Heart right ventricle (tissue), 16 donors: ENCODE measurements at regions of chr21 and their contacts with region 1.

Region 1: GRCh38 chr21:36113647-36114428 is 21.0 kb upstream of the CBR3 start:
- DNase-seq: no peak
- ATAC-seq: no peak
- H3K4me3 ChIP-seq: peak overlapping the region in 1 of 10 donors; percentile 59
- H3K27ac ChIP-seq: peak overlapping the region in 1 of 10 donors; percentile 75
- H3K4me1 ChIP-seq: peaks cover 0 to 19% (median 4%) of the 10 kb centered on the region in 9 donors
- H3K27me3 ChIP-seq: no peaks in the 10 kb centered on the region
- CTCF ChIP-seq: no peak

Region 2: GRCh38 chr21:36060159-36060921 is 53.5 kb before region 1 on chr21 and contains the start of gene SETD4:
- intact Hi-C with region 1: loop called in 5 of 10 experiments (anchors 2 to 10 kb)
- DNase-seq: peak; percentile 90 to 95
- ATAC-seq: peak; percentile 94 to 99 (median 97)
- H3K4me3 ChIP-seq: peak within 1 kb of the TSS; percentile 50 to 97 (median 74)
- H3K27ac ChIP-seq: peak within 1 kb of the TSS; percentile 91 to 100 (median 94)
- H3K4me1 ChIP-seq: peaks cover 0 to 37% (median 16%) of the 10 kb centered on the region in 9 donors
- H3K27me3 ChIP-seq: no peaks in the 10 kb centered on the region
- CTCF ChIP-seq: no peak
- total RNA-seq, gene SETD4: 7.8 to 13.1 (median 10.9) TPM